ENCODE measurements at regions of chr11 and their contacts with region 1.

Region 1: DNA sequence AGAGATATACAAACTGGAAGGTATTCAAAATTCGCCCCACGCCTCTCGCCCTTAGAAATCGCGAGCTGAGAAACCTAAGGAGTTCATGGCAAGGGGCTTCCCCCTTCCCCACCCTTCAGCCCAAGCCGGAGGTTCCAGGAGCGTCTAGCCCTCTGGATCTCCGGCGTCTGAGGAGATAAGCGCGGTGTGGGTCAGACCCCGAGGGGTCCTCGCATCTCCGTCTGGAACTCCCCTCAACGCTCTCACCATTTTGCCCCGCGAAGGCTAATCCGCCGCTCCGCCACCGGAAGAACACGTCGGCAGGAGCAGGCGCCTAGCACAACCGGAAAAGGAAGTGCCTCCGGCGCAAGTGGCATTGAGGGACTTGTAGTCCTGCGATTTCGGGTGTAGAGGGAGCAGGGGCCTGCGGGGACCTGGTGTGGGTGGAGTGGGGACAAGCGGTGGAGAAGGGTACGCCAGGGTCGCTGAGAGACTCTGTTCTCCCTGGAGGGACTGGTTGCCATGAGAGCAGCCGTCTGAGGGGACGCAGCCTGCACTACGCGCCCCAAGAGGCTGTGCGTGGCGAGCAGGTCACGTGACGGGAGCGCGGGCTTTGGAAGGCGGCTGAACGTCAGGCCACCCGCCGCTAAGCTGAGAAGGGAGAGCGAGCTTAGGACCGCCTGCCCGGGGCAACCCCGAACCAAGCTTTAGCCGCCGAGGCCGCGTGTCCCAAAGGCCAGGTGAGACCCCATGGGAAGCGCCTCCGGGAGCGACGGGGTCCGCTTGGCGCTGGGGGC is at the starts of genes FEN1 and TMEM258:
- DNase-seq: peak; percentile 94
- ATAC-seq: peak; percentile 88
- H3K4me3 Mint-ChIP-seq: peak within 1 kb of the TSS; percentile 92
- H3K27ac Mint-ChIP-seq: peak within 1 kb of the TSS; percentile 98
- H3K4me1 Mint-ChIP-seq: peaks cover 44% of the 10 kb centered on the region
- H3K27me3 Mint-ChIP-seq: no peaks in the 10 kb centered on the region
- total RNA-seq, gene FEN1: 70.0 to 108 TPM
- total RNA-seq, gene TMEM258: 172 to 176 TPM

Region 2: DNA sequence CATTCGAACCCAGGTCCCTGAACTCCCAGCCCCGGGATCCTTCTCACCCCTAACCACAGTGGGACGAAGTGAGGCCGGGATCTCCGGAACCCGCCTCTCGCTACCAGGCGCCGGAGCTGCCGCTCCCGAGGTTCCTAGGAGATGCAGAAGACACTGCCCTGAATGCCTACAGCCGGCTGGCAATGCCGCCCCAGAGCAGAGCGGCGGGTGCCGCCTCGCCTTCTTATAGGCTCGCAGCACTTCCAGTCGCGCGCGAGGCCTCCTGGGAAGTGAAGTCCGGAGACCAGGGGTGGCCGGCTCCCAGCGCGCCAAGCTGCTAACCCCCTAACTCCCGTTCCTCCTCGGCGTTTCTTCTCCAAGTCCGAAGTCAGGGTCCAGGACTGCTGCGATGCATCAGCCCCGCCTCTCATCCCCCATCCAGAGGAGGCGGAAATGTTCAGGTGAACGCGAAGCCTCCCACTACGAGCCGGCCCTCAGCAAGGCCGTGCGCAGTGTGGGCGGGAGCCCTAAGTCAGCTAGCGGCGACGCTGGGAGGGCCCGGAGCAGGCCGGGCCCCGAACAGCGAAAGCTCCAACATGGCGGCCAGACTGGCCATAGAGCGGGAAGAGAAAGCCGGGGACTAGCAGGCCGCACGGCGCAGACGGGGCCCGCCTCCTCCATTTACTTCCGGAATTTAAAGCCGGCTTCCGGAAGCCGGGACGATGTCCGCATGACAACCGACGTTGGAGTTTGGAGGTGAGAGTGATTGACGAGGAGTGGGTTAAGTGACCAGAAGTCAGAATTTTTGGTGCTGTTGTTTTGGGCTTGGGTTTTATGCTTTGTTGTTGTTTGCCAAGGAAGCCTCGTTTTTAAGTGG is 430.6 kb before region 1 on chr11 and contains the starts of genes CYB561A3 and TMEM138:
- CTCF ChIA-PET with region 1: no interaction called
- POLR2A ChIA-PET with region 1: no interaction called
- intact Hi-C with region 1: loop called in 1 of 2 experiments (anchors 1 kb)
- DNase-seq: peak; percentile 95
- ATAC-seq: peak; percentile 96
- H3K4me3 Mint-ChIP-seq: peak within 1 kb of the TSS; percentile 100
- H3K27ac Mint-ChIP-seq: peak within 1 kb of the TSS; percentile 100
- H3K4me1 Mint-ChIP-seq: peaks cover 34% of the 10 kb centered on the region
- H3K27me3 Mint-ChIP-seq: no peaks in the 10 kb centered on the region
- total RNA-seq, gene CYB561A3: 31.8 to 34.4 TPM
- total RNA-seq, gene TMEM138: 38.6 to 56.5 TPM

Region 3: DNA sequence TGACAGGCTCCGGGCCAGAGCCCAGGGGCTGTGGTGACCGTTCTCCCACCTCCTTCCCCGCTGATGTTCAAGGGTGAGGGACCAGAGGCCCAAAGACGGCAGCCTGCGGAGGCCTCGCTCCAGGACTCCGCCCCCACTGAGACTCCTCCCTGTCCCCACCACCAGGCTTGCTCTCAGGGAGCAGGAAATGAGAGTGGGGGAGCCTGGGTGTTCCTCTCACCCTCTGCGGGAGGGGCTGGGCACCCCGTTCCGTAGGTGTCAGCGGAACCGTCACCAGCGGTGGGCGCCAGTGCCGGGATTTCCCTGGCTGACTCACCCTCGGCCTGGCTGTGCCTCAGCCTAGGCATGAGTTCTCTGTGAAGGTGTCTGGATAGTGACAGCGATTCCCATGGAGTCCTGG is 96.6 kb before region 1 on chr11:
- CTCF ChIA-PET with region 1: no interaction called
- POLR2A ChIA-PET with region 1: no interaction called
- intact Hi-C with region 1: loop called in 1 of 2 experiments (anchors 1 kb)
- DNase-seq: peak; percentile 97
- ATAC-seq: peak; percentile 100
- H3K4me3 Mint-ChIP-seq: peak overlapping the region; percentile 21
- H3K27ac Mint-ChIP-seq: peak overlapping the region; percentile 86
- H3K4me1 Mint-ChIP-seq: peaks cover 27% of the 10 kb centered on the region
- H3K27me3 Mint-ChIP-seq: no peaks in the 10 kb centered on the region

Region 4: GRCh38 chr11:61805146-61805545 is 12.6 kb after region 1 on chr11:
- CTCF ChIA-PET with region 1: interaction called, 115 read pairs
- POLR2A ChIA-PET with region 1: interaction called, 3 read pairs
- intact Hi-C with region 1: no loop called
- DNase-seq: no peak
- ATAC-seq: no peak
- H3K4me3 Mint-ChIP-seq: no peak overlapping the region
- H3K27ac Mint-ChIP-seq: no peak overlapping the region
- H3K4me1 Mint-ChIP-seq: no peaks in the 10 kb centered on the region
- H3K27me3 Mint-ChIP-seq: no peaks in the 10 kb centered on the region

Region 5: GRCh38 chr11:61871158-61871597 is 78.7 kb after region 1 on chr11:
- CTCF ChIA-PET with region 1: interaction called, 4 read pairs
- POLR2A ChIA-PET with region 1: no interaction called
- intact Hi-C with region 1: loop called in 1 of 2 experiments (anchors 2 kb)
- DNase-seq: peak; percentile 84
- ATAC-seq: peak; percentile 98
- H3K4me3 Mint-ChIP-seq: peak overlapping the region; percentile 46
- H3K27ac Mint-ChIP-seq: no peak overlapping the region
- H3K4me1 Mint-ChIP-seq: peaks cover 2% of the 10 kb centered on the region
- H3K27me3 Mint-ChIP-seq: peaks cover 3% of the 10 kb centered on the region

Region 6: GRCh38 chr11:61947486-61948210 is 155.2 kb after region 1 on chr11:
- CTCF ChIA-PET with region 1: interaction called, 17 read pairs
- POLR2A ChIA-PET with region 1: interaction called, 5 read pairs
- intact Hi-C with region 1: loop called in 1 of 2 experiments (anchors 1 kb)
- DNase-seq: peak; percentile 84
- ATAC-seq: peak; percentile 72
- H3K4me3 Mint-ChIP-seq: no peak overlapping the region
- H3K27ac Mint-ChIP-seq: no peak overlapping the region
- H3K4me1 Mint-ChIP-seq: peaks cover 5% of the 10 kb centered on the region
- H3K27me3 Mint-ChIP-seq: peaks cover 2% of the 10 kb centered on the region

Region 7: GRCh38 chr11:62108017-62108750 is 315.7 kb after region 1 on chr11:
- CTCF ChIA-PET with region 1: interaction called, 37 read pairs
- POLR2A ChIA-PET with region 1: no interaction called
- intact Hi-C with region 1: loop called in 1 of 2 experiments (anchors 1 kb)
- DNase-seq: peak; percentile 51
- ATAC-seq: peak; percentile 32
- H3K4me3 Mint-ChIP-seq: no peak overlapping the region
- H3K27ac Mint-ChIP-seq: no peak overlapping the region
- H3K4me1 Mint-ChIP-seq: peaks cover 16% of the 10 kb centered on the region
- H3K27me3 Mint-ChIP-seq: peaks cover 2% of the 10 kb centered on the region

Measured in activated CD4-positive, alpha-beta T cell treated with anti-CD3 and anti-CD28 coated beads for 36 hours (primary cell).